ENCODE measurements at regions of chr9 and their contacts with region 1.

Region 1: GRCh38 chr9:1009101-1009707 is 32.7 kb downstream of the DMRT3 start:
- DNase-seq: peak; percentile 70
- CTCF ChIP-seq: peak; percentile 98

Region 2: DNA sequence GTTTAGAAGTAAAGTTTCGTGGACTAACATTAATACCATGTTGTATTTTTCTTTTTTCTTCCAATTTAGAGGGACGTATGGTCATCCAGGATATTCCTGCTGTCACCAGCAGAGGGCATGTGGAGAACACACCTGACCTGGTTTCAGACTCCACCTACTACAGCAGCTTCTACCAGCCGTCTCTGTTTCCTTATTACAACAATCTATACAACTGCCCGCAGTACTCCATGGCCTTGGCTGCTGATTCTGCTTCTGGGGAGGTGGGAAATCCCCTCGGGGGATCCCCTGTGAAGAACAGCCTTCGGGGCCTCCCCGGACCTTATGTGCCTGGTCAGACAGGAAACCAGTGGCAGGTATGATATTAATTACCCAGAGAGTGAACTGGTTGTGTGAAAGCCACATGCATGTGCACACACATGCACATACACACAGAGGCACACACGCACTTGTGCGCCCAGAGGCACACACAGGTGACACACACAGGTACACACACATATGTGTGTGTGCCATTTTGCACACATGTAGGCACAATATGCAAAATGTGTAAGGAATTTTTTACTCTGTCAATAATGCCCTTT is 115.3 kb before region 1 on chr9:
- in situ Hi-C with region 1: loop called (anchors 5 kb)
- DNase-seq: peak; percentile 89
- CTCF ChIP-seq: peak; percentile 76

Region 3: DNA sequence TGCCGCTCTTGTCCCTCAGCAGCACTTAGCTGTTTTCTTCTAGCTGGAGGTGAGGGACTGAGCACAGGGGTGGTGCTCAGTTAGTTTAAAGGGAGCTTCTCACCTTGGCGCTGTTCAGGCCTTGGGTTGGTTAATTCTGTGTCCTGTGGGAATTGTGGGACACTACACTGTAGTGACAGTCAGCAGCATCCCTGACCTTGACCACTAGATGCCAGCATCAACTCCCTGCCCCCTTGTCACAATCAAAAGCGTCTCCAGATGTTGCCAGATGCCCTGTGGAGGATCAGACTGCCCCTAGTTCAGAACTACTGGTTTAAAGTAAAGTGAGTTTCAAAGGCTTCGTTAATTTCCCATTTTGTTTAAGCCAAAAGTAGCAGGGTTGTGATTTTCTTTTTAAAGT is 98.2 kb before region 1 on chr9:
- in situ Hi-C with region 1: no loop called
- DNase-seq: no peak
- CTCF ChIP-seq: no peak